CD4-positive, alpha-beta memory T cell (primary cell): ENCODE measurements at regions of chr19 and their contacts with region 1.

Region 1: DNA sequence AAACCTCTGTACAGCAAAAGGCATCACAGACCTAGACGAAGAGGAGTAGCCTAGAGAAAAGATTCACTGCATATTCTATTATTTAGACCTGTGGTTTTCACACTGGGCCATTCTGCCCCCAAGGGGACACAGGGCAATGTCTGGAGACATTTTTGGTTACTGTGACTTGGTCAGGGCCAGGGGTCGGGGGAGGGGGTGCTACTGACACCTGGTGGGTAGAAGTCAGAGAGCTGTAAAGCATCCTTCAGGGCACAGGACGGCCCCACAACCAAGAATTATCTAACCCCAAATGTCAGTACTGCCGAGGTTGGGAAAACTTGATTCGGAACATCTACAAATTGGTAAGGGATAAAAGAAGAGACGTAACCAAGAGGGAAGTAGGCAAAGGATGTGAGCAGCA is 11.3 kb downstream of the ELAVL1 start:
- DNase-seq: no peak
- H3K4me3 ChIP-seq: no peak overlapping the region
- H3K4me3 Mint-ChIP-seq: no peak overlapping the region
- H3K27ac ChIP-seq: no peak overlapping the region
- H3K27ac Mint-ChIP-seq: peak overlapping the region in 6 of 7 donors; percentile 12 to 85 (median 41)
- H3K4me1 ChIP-seq: peaks cover 29% of the 10 kb centered on the region
- H3K4me1 Mint-ChIP-seq: peaks cover 30 to 61% (median 38%) of the 10 kb centered on the region in 4 donors
- H3K27me3 ChIP-seq: no peaks in the 10 kb centered on the region
- H3K27me3 Mint-ChIP-seq: no peaks in the 10 kb centered on the region

Region 2: GRCh38 chr19:7978179-7978825 is 15.8 kb before region 1 on chr19:
- CTCF ChIA-PET with region 1: no interaction called
- POLR2A ChIA-PET with region 1: no interaction called
- intact Hi-C with region 1: no loop called
- DNase-seq: no peak
- H3K4me3 ChIP-seq: no peak overlapping the region
- H3K4me3 Mint-ChIP-seq: no peak overlapping the region
- H3K27ac ChIP-seq: no peak overlapping the region
- H3K27ac Mint-ChIP-seq: no peak overlapping the region
- H3K4me1 ChIP-seq: no peaks in the 10 kb centered on the region
- H3K4me1 Mint-ChIP-seq: no peaks in the 10 kb centered on the region
- H3K27me3 ChIP-seq: no peaks in the 10 kb centered on the region
- H3K27me3 Mint-ChIP-seq: no peaks in the 10 kb centered on the region

Region 3: GRCh38 chr19:8005534-8006256 is 11.6 kb after region 1 on chr19 and contains the start of gene ELAVL1:
- CTCF ChIA-PET with region 1: interaction called, 11 read pairs
- POLR2A ChIA-PET with region 1: no interaction called
- intact Hi-C with region 1: no loop called
- DNase-seq: peak; percentile 86 to 91 (median 88)
- H3K4me3 ChIP-seq: peak within 1 kb of the TSS; percentile 39 to 77
- H3K4me3 Mint-ChIP-seq: peak within 1 kb of the TSS; percentile 89 to 97 (median 91)
- H3K27ac ChIP-seq: peak within 1 kb of the TSS; percentile 70
- H3K27ac Mint-ChIP-seq: peak within 1 kb of the TSS; percentile 85 to 97 (median 93)
- H3K4me1 ChIP-seq: peaks cover 42% of the 10 kb centered on the region
- H3K4me1 Mint-ChIP-seq: peaks cover 33 to 39% (median 37%) of the 10 kb centered on the region in 4 donors
- H3K27me3 ChIP-seq: no peaks in the 10 kb centered on the region
- H3K27me3 Mint-ChIP-seq: no peaks in the 10 kb centered on the region
- total RNA-seq, gene ELAVL1: 54.2 to 54.7 TPM

Region 4: GRCh38 chr19:8028951-8029491 is 34.9 kb after region 1 on chr19:
- CTCF ChIA-PET with region 1: no interaction called
- POLR2A ChIA-PET with region 1: no interaction called
- intact Hi-C with region 1: no loop called
- DNase-seq: no peak
- H3K4me3 ChIP-seq: no peak overlapping the region
- H3K4me3 Mint-ChIP-seq: no peak overlapping the region
- H3K27ac ChIP-seq: no peak overlapping the region
- H3K27ac Mint-ChIP-seq: no peak overlapping the region
- H3K4me1 ChIP-seq: no peaks in the 10 kb centered on the region
- H3K4me1 Mint-ChIP-seq: no peaks in the 10 kb centered on the region
- H3K27me3 ChIP-seq: no peaks in the 10 kb centered on the region
- H3K27me3 Mint-ChIP-seq: peaks cover 2 to 3% of the 10 kb centered on the region in 2 donors